ENCODE measurements at regions of chr18 and their contacts with region 1.

Region 1: DNA sequence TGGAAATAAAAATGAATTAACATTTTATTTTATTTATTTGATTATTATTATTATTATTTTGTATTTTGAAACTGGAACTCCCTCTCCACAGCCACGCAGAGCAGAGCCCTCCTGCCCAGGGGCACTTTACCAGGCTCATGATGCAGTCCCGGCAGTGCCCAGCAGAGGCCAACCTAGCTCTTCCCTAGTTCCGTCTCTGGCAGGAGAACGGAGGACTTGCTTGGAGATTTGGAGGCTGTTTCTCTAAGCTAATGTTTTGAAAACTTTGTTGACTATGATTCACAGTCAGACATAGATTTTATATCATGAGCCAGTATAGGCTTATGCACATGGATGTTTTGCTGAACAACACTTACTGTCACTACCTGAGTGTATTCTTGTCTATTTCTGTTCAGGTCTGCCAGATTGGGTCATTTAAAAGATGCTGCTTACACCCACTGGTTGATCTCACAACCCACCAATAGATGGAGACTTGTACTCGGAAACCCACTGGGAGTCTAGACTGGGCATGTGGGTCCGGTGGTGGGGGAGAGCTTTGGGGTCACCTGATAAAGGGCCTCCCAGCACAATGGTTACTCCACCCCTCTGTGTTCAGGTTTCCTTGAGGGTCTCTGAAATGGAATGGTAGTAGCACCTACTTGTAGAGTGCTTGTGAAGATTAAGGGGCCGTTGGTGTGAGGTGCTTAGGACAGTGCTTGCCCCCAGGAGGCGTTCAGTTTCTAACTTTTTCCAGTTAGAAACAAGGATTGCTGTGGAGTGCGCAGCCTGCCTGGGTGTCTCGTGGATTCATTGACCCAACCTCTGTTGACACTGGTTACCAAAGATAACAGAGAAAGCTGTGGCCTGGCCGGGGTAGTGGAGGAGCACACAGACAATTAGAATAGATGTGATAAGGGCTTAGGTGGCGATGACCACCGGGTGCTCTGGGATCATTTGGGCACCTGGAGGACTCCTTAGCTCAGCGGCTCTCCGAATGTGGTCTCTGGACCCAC is 177.3 kb downstream of the HAUS1 start:
- DNase-seq: peak; percentile 23 to 56 (median 42)
- H3K4me3 ChIP-seq: no peak overlapping the region
- H3K4me3 Mint-ChIP-seq: no peak overlapping the region
- H3K27ac ChIP-seq: no peak overlapping the region
- H3K27ac Mint-ChIP-seq: no peak overlapping the region
- H3K4me1 ChIP-seq: peaks cover 8% of the 10 kb centered on the region
- H3K4me1 Mint-ChIP-seq: peaks cover 9 to 23% (median 14%) of the 10 kb centered on the region in 4 donors
- H3K27me3 ChIP-seq: no peaks in the 10 kb centered on the region
- H3K27me3 Mint-ChIP-seq: no peaks in the 10 kb centered on the region

Region 2: DNA sequence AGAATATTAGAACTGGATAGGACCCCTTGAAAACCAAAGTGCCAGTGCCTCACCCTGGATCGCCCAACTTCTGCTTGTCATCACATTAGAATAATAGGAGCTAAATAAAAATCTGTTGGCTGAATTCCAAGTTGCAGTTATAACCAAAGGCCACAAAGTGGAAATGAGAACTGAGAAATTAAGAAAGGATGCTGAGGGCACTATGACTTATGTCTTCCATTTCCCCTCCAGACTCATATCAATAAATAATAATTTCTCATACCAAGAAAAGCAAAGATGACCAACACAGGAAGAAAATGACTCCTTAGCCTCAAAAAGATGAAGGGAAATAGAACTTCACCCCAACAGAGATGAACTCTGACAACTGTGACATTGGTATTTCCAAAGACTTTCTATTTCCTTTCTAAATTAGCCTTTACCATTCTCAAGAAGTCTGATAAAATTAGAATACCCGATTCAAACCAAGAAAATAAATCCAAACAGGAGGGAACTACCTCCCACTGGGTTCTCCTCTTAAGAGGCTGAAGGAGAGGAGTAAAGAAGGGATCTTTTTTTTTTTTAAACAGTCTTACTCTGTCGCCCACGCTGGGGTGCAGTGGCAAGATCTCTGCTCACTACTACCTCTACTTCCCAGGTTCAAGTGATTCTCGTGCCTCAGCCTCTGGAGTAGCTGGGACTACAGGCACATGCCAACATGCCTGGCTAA is 267.8 kb before region 1 on chr18:
- CTCF ChIA-PET with region 1: no interaction called
- POLR2A ChIA-PET with region 1: no interaction called
- intact Hi-C with region 1: no loop called
- DNase-seq: no peak
- H3K4me3 ChIP-seq: no peak overlapping the region
- H3K4me3 Mint-ChIP-seq: no peak overlapping the region
- H3K27ac ChIP-seq: no peak overlapping the region
- H3K27ac Mint-ChIP-seq: peak overlapping the region in 1 of 7 donors; percentile 52
- H3K4me1 ChIP-seq: peaks cover 6% of the 10 kb centered on the region
- H3K4me1 Mint-ChIP-seq: peaks cover 4 to 6% (median 4%) of the 10 kb centered on the region in 4 donors
- H3K27me3 ChIP-seq: no peaks in the 10 kb centered on the region
- H3K27me3 Mint-ChIP-seq: no peaks in the 10 kb centered on the region

Region 3: DNA sequence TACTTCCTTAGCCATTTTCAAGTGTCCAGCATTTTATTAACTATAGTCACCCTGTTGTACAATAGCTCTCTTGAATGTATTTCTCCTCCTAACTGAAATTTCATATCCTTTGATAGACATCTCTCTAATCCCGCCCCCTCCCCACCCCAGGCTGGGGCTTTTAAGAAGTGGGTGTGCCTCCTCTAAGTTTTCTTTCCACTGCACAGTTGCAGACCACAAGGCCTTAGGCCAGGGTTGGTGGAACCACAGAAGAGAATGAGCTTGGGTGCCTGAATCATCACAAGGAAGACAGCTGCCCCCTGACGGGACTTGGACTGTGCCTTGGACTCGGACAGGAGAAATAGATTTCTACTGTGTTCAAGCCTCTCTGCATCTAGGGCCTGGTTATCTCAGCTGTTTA is 16.1 kb after region 1 on chr18:
- CTCF ChIA-PET with region 1: interaction called, 10 read pairs
- POLR2A ChIA-PET with region 1: no interaction called
- intact Hi-C with region 1: no loop called
- DNase-seq: no peak
- H3K4me3 ChIP-seq: no peak overlapping the region
- H3K4me3 Mint-ChIP-seq: no peak overlapping the region
- H3K27ac ChIP-seq: no peak overlapping the region
- H3K27ac Mint-ChIP-seq: no peak overlapping the region
- H3K4me1 ChIP-seq: no peaks in the 10 kb centered on the region
- H3K4me1 Mint-ChIP-seq: peaks cover 0 to 4% (median 1%) of the 10 kb centered on the region in 4 donors
- H3K27me3 ChIP-seq: no peaks in the 10 kb centered on the region
- H3K27me3 Mint-ChIP-seq: peaks cover 2 to 3% of the 10 kb centered on the region in 2 donors

Region 4: DNA sequence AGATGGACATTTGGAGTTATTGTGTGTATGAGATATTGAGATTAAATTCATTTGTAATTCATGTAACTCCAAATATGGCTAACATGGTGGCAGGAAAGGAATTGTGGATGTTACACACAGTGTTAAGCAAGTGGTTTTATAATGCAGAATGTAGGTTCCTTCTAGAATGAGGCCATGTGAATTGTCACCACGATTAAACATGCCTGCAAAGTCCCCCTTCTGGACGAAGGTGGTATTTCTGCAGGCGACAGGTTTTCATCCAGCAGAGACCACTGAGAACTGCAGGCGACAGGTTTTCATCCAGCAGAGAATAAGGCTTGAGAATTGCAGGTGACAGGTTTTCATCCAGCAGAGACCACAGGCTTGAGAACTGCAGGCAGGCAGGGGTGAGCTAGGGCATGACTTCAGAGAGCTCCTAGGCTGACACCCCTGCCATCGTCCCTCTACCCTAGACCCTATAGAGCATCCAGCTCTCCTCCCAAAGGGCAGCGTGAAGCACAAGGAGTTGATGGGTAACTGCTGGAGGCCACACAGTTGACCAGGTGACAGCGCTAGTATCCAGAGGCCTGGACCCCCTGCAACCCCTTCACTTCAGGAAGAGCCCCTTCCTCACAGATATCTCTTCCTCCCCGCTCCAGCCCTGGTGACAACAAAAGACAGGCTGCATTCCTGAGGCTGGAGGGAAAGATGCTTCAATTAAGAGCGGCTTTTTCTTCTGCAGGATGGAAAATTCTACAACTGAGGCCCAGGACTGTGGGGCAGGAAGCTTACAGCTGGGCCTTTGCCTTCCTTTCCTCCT is 199.8 kb after region 1 on chr18:
- CTCF ChIA-PET with region 1: interaction called, 48 read pairs
- POLR2A ChIA-PET with region 1: no interaction called
- intact Hi-C with region 1: loop called (anchors 1 kb)
- DNase-seq: peak in 4 of 5 donors; percentile 36 to 52 (median 44)
- H3K4me3 ChIP-seq: no peak overlapping the region
- H3K4me3 Mint-ChIP-seq: no peak overlapping the region
- H3K27ac ChIP-seq: no peak overlapping the region
- H3K27ac Mint-ChIP-seq: no peak overlapping the region
- H3K4me1 ChIP-seq: no peaks in the 10 kb centered on the region
- H3K4me1 Mint-ChIP-seq: peaks cover 0 to 6% (median 2%) of the 10 kb centered on the region in 4 donors
- H3K27me3 ChIP-seq: no peaks in the 10 kb centered on the region
- H3K27me3 Mint-ChIP-seq: peaks cover 8 to 12% of the 10 kb centered on the region in 2 donors

Region 5: GRCh38 chr18:46622999-46623398 is 341.5 kb after region 1 on chr18:
- CTCF ChIA-PET with region 1: interaction called, 14 read pairs
- POLR2A ChIA-PET with region 1: no interaction called
- intact Hi-C with region 1: no loop called
- DNase-seq: no peak
- H3K4me3 ChIP-seq: no peak overlapping the region
- H3K4me3 Mint-ChIP-seq: peak overlapping the region in 4 of 8 donors; percentile 3 to 58 (median 21)
- H3K27ac ChIP-seq: no peak overlapping the region
- H3K27ac Mint-ChIP-seq: peak overlapping the region in 1 of 7 donors; percentile 61
- H3K4me1 ChIP-seq: peaks cover 16% of the 10 kb centered on the region
- H3K4me1 Mint-ChIP-seq: peaks cover 12 to 30% (median 19%) of the 10 kb centered on the region in 4 donors
- H3K27me3 ChIP-seq: no peaks in the 10 kb centered on the region
- H3K27me3 Mint-ChIP-seq: peaks cover 1 to 4% of the 10 kb centered on the region in 2 donors